ENCODE measurements at regions of chr11 and their contacts with region 1.

Region 1: GRCh38 chr11:65859200-65859811 is 927 bp upstream of the MUS81 start:
- DNase-seq: peak; percentile 98
- H3K4me3 ChIP-seq: peak overlapping the region; percentile 21 to 76 (median 71)
- H3K27ac ChIP-seq: peak overlapping the region; percentile 77
- H3K4me1 ChIP-seq: peaks cover 41% of the 10 kb centered on the region
- H3K27me3 ChIP-seq: no peaks in the 10 kb centered on the region
- CTCF ChIP-seq: peak in 1 of 2 donors; percentile 22
- POLR2A ChIP-seq: peak; percentile 94

Region 2: GRCh38 chr11:65637794-65638317 is 221.4 kb before region 1 on chr11 and contains the start of gene SIPA1:
- CTCF ChIA-PET with region 1: interaction called, 10 read pairs
- POLR2A ChIA-PET with region 1: no interaction called
- dilution Hi-C with region 1: no loop called
- intact Hi-C with region 1: no loop called
- DNase-seq: peak; percentile 96
- H3K4me3 ChIP-seq: peak within 1 kb of the TSS; percentile 56 to 62 (median 62)
- H3K27ac ChIP-seq: peak within 1 kb of the TSS; percentile 78
- H3K4me1 ChIP-seq: peaks cover 41% of the 10 kb centered on the region
- H3K27me3 ChIP-seq: no peaks in the 10 kb centered on the region
- CTCF ChIP-seq: peak; percentile 58 to 83
- POLR2A ChIP-seq: peak; percentile 96
- total RNA-seq, gene SIPA1: 119 and 128 TPM in 2 replicates

Region 3: GRCh38 chr11:65652511-65653231 is 206.6 kb before region 1 on chr11:
- CTCF ChIA-PET with region 1: interaction called, 3 read pairs
- POLR2A ChIA-PET with region 1: interaction called, 5 read pairs
- dilution Hi-C with region 1: no loop called
- intact Hi-C with region 1: loop called (anchors 2 kb)
- DNase-seq: peak; percentile 96
- H3K4me3 ChIP-seq: peak overlapping the region in 2 of 3 experiments; percentile 25 to 49
- H3K27ac ChIP-seq: peak overlapping the region; percentile 95
- H3K4me1 ChIP-seq: peaks cover 23% of the 10 kb centered on the region
- H3K27me3 ChIP-seq: no peaks in the 10 kb centered on the region
- CTCF ChIP-seq: no peak
- POLR2A ChIP-seq: peak; percentile 76

Region 4: GRCh38 chr11:65873318-65874156 is 14.2 kb after region 1 on chr11:
- CTCF ChIA-PET with region 1: interaction called, 73 read pairs
- POLR2A ChIA-PET with region 1: interaction called, 19 read pairs
- dilution Hi-C with region 1: no loop called
- intact Hi-C with region 1: loop called (anchors 1 kb)
- DNase-seq: peak; percentile 83
- H3K4me3 ChIP-seq: peak overlapping the region; percentile 42 to 47 (median 43)
- H3K27ac ChIP-seq: peak overlapping the region; percentile 30
- H3K4me1 ChIP-seq: peaks cover 17% of the 10 kb centered on the region
- H3K27me3 ChIP-seq: no peaks in the 10 kb centered on the region
- CTCF ChIP-seq: no peak
- POLR2A ChIP-seq: peak; percentile 76

Region 5: DNA sequence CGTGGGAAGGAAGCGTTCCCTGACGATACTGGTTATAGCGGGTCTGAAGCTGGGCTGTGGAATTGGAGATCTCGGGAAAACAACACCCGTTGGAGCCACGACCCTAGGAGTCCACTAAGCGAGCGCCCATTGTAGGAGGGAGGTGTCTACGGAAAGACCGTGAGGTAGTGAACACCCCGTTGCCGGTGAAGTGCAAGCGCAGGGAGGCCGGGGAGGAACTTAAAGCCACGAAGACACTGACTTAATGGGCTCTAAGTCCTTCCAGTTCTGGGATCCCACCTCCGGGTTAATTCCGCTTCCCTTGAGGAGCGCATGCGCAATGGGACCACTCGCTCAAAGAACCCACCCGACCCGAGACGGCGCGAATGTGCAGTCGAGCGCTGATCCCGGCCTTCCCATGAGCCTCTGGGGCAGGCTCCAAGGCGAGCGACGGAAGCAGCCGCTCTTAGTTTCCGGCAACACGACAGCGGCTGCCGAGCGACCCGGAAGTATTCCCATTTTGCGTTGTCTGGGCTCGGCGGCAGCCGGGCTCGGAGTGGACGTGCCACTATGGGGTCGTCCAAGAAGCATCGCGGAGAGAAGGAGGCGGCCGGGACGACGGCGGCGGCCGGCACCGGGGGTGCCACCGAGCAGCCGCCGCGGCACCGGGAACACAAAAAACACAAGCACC is 102.1 kb after region 1 on chr11 and contains the start of gene SART1:
- CTCF ChIA-PET with region 1: no interaction called
- POLR2A ChIA-PET with region 1: no interaction called
- dilution Hi-C with region 1: no loop called
- intact Hi-C with region 1: loop called (anchors 1 kb)
- DNase-seq: peak; percentile 99
- H3K4me3 ChIP-seq: peak within 1 kb of the TSS; percentile 79 to 98 (median 90)
- H3K27ac ChIP-seq: peak within 1 kb of the TSS; percentile 78
- H3K4me1 ChIP-seq: peaks cover 11% of the 10 kb centered on the region
- H3K27me3 ChIP-seq: no peaks in the 10 kb centered on the region
- CTCF ChIP-seq: no peak
- POLR2A ChIP-seq: peak; percentile 98
- total RNA-seq, gene SART1: 58.9 and 62.7 TPM in 2 replicates

Region 6: DNA sequence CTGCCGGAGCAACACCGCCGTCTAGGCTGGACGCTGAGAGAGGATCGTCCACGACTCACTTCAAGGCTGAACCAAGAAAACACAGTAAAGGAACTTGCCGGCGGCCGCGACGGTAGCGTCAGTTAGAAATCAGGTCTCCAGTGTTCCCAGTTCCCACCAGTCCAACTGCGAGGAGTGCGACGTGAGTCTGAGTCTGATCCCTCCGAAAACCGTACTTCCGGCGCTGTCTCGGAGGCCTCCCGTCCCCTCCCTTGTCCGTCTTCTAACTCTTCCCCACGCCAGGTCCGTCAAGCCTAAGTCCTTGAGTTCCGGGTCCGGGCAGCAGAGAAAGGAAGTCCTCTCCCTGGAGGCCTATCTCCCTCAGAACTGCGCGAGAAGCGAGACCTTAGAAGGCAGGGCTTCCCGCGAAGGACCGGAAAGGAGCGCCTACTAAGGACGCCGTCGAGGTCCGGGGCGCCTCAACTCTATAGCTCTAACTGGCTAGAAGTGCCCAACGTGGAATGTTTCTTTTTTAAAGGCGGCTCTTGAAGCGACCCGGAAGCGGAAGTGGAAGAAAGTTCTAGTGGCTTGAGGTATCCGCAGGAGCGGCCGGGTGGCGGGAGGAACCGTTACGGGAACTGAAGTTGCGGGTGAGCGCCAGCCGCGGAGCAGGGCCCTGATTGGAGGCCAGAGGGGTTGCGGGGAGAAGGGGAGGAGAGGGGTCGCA is 142.8 kb after region 1 on chr11 and contains the starts of genes BANF1 and EIF1AD:
- CTCF ChIA-PET with region 1: no interaction called
- POLR2A ChIA-PET with region 1: no interaction called
- dilution Hi-C with region 1: no loop called
- intact Hi-C with region 1: loop called (anchors 1 kb)
- DNase-seq: peak; percentile 98
- H3K4me3 ChIP-seq: peak within 1 kb of the TSS; percentile 68 to 88 (median 82)
- H3K27ac ChIP-seq: peak within 1 kb of the TSS; percentile 66
- H3K4me1 ChIP-seq: peaks cover 9% of the 10 kb centered on the region
- H3K27me3 ChIP-seq: no peaks in the 10 kb centered on the region
- CTCF ChIP-seq: no peak
- POLR2A ChIP-seq: peak; percentile 93
- total RNA-seq, gene BANF1: 246 and 269 TPM in 2 replicates
- total RNA-seq, gene EIF1AD: 39.7 and 42.4 TPM in 2 replicates

Region 7: DNA sequence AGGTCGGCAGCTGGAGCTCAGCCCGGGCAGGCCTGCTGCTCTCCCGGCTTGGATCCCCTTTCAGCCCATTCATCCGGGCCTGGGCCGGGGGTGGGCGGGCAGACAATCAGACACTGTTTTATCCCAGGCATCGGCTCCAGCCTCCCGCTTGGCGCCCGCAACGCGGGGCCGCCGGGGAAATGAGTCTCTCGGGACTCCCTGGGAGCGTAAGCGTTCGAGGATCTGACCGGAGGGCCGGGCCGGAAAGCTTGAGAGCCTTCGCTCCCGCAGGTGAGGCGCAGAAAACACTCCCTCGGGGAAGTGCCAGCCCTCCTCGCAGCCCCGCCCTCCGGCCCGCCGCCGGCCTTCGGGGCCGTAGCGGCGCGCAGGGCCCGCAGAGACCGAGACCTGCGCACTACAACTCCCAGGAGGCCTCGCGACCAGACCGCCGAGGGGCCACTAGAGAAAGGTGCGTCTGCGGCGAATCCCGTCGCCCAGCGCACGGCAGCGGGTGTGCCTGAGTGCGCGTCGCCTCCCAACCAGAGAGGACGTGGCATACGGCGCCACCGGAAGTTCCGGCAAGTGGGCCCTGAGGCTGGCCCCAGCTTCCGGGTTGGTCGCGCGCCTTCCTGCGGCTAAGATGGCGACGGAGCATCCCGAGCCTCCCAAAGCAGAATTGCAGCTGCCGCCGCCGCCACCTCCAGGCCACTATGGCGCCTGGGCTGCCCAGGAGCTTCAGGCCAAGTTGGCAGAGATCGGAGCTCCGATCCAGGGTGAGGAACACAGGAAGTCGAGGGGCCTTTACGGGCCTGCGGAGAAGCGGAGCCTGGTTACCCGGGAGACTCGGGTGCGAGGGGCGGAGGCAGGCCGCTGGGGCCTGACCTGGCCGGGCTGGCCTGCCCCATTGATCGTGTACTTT is 192.7 kb after region 1 on chr11 and contains the start of gene SF3B2:
- CTCF ChIA-PET with region 1: interaction called, 4 read pairs
- POLR2A ChIA-PET with region 1: no interaction called
- dilution Hi-C with region 1: no loop called
- intact Hi-C with region 1: loop called (anchors 1 kb)
- DNase-seq: peak; percentile 99
- H3K4me3 ChIP-seq: peak within 1 kb of the TSS; percentile 67 to 93 (median 80)
- H3K27ac ChIP-seq: peak within 1 kb of the TSS; percentile 63
- H3K4me1 ChIP-seq: peaks cover 14% of the 10 kb centered on the region
- H3K27me3 ChIP-seq: peaks cover 0 to 1% of the 10 kb centered on the region in 2 experiments
- CTCF ChIP-seq: no peak
- POLR2A ChIP-seq: peak; percentile 88
- total RNA-seq, gene SF3B2: 179 and 196 TPM in 2 replicates

Measured in endothelial cell of umbilical vein (primary cell).